Lower leg skin (tissue), 4 donors: ENCODE measurements at regions of chr2 and their contacts with region 1.

Region 1: GRCh38 chr2:106638043-106638442 is 150.9 kb downstream of the CD8B2 start:
- DNase-seq: no peak
- H3K4me3 ChIP-seq: no peak overlapping the region
- CTCF ChIP-seq: no peak
- POLR2A ChIP-seq: no peak

Region 2: GRCh38 chr2:107174171-107174570 is 536.1 kb after region 1 on chr2:
- intact Hi-C with region 1: no loop called
- DNase-seq: no peak
- H3K4me3 ChIP-seq: no peak overlapping the region
- CTCF ChIP-seq: no peak
- POLR2A ChIP-seq: no peak

Region 3: GRCh38 chr2:107627164-107627563 is 989.1 kb after region 1 on chr2:
- intact Hi-C with region 1: loop called (anchors 5 kb)
- DNase-seq: no peak
- H3K4me3 ChIP-seq: no peak overlapping the region
- CTCF ChIP-seq: no peak
- POLR2A ChIP-seq: no peak